Tibial artery (tissue), 4 donors: ENCODE measurements at regions of chr12 and their contacts with region 1.

Region 1: GRCh38 chr12:111271674-111272418 is 97.0 kb downstream of the PHETA1 start:
- DNase-seq: no peak
- H3K4me3 ChIP-seq: no peak overlapping the region
- H3K27ac ChIP-seq: no peak overlapping the region
- H3K4me1 ChIP-seq: peaks cover 0 to 8% (median 3%) of the 10 kb centered on the region in 4 donors
- H3K27me3 ChIP-seq: peaks cover 0 to 73% of the 10 kb centered on the region in 2 donors
- CTCF ChIP-seq: no peak

Region 2: DNA sequence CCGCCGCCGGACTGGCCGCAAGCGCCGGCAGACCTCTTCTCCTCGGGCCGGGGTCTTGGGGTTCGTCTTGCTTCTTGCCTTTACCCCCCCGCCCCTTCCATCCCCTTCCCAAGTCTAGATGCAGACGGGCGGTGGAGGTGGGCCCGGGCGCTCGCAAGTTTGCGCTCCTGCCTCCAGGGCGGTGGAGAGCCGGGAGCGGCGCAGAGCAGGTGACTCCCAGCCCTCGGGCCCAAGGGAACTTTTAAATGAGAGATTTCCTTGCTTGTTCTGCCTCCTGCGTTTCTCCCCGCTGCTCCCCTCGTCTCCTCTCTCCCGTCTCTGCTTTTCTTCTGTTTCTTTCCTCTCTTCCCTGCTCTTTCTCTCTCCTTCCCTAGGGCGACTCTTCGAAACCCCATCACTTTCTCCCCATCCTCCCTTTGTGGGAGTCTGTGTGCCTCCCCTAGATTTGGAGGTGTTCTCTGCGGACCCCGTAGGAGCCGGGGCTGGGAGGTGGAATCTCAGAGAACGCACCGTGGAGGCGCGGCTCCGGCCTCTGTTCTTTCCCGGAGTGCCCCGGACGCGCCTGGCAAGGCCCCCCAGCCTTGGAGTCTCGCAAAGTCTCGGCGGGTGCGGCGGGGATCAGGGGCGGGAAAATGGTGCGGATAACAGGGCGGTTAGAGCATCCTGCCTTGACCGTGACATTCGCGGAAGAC is 236.8 kb before region 1 on chr12:
- intact Hi-C with region 1: no loop called
- DNase-seq: peak in 1 of 2 donors; percentile 42
- H3K4me3 ChIP-seq: no peak overlapping the region
- H3K27ac ChIP-seq: no peak overlapping the region
- H3K4me1 ChIP-seq: peaks cover 0 to 40% (median 10%) of the 10 kb centered on the region in 4 donors
- H3K27me3 ChIP-seq: peaks cover 0 to 87% of the 10 kb centered on the region in 2 donors
- CTCF ChIP-seq: no peak

Region 3: GRCh38 chr12:111149299-111149698 is 122.5 kb before region 1 on chr12:
- intact Hi-C with region 1: no loop called
- DNase-seq: no peak
- H3K4me3 ChIP-seq: no peak overlapping the region
- H3K27ac ChIP-seq: no peak overlapping the region
- H3K4me1 ChIP-seq: peaks cover 0 to 5% (median 0%) of the 10 kb centered on the region in 4 donors
- H3K27me3 ChIP-seq: peaks cover 0 to 37% of the 10 kb centered on the region in 2 donors
- CTCF ChIP-seq: no peak

Region 4: DNA sequence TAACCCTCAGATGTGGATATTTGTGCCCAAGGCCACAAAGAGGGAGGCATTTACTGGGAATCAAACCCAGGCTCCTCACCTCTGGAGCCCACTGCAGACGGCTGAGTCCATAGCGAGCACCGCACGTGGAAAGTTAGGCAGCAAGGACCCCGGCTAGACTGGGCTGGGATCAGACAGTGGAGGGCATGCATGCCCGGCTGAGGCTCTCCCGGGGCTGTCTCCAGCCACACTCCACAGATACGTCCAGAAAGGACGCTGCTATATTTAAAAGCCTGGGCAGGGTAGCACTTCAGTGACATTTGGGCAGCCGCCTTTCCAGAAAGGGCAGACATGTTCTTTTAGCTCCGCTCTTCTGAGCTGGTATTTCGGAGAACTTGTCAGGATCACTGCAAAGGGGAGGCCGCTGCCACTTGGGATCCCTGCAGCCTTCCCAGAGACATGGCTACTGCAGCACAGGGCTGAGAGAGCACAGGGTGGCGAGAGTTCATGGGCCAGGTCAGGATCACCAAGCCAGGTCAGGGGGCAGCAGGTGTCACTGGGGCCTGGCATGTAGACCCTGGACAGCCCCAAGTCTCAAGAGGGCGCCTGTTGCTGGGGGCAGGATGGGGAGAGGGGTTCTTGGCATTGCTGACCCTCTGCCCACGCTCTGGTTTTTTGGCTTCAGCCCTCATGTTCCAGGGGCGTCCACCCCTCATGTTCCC is 24.6 kb before region 1 on chr12:
- intact Hi-C with region 1: loop called (anchors 1 kb)
- DNase-seq: no peak
- H3K4me3 ChIP-seq: no peak overlapping the region
- H3K27ac ChIP-seq: no peak overlapping the region
- H3K4me1 ChIP-seq: no peaks in the 10 kb centered on the region
- H3K27me3 ChIP-seq: peaks cover 0 to 41% of the 10 kb centered on the region in 2 donors
- CTCF ChIP-seq: no peak